Activated CD8-positive, alpha-beta T cell treated with anti-CD3 and anti-CD28 coated beads for 36 hours (primary cell): ENCODE measurements at regions of chr15 and their contacts with region 1.

Region 1: GRCh38 chr15:40782580-40783227 is 12.9 kb downstream of the C15orf62 start:
- DNase-seq: peak; percentile 87
- ATAC-seq: peak; percentile 90
- H3K4me3 Mint-ChIP-seq: no peak overlapping the region
- H3K27ac Mint-ChIP-seq: no peak overlapping the region
- H3K4me1 Mint-ChIP-seq: peaks cover 17% of the 10 kb centered on the region
- H3K27me3 Mint-ChIP-seq: no peaks in the 10 kb centered on the region
- CTCF ChIP-seq: peak; percentile 77

Region 2: GRCh38 chr15:40702077-40702476 is 80.6 kb before region 1 on chr15:
- CTCF ChIA-PET with region 1: interaction called, 13 read pairs
- POLR2A ChIA-PET with region 1: interaction called, 3 read pairs
- intact Hi-C with region 1: no loop called
- DNase-seq: no peak
- ATAC-seq: no peak
- H3K4me3 Mint-ChIP-seq: no peak overlapping the region
- H3K27ac Mint-ChIP-seq: no peak overlapping the region
- H3K4me1 Mint-ChIP-seq: peaks cover 3% of the 10 kb centered on the region
- H3K27me3 Mint-ChIP-seq: no peaks in the 10 kb centered on the region
- CTCF ChIP-seq: no peak

Region 3: GRCh38 chr15:40736575-40736974 is 46.1 kb before region 1 on chr15:
- CTCF ChIA-PET with region 1: interaction called, 18 read pairs
- POLR2A ChIA-PET with region 1: no interaction called
- intact Hi-C with region 1: no loop called
- DNase-seq: no peak
- ATAC-seq: no peak
- H3K4me3 Mint-ChIP-seq: no peak overlapping the region
- H3K27ac Mint-ChIP-seq: no peak overlapping the region
- H3K4me1 Mint-ChIP-seq: peaks cover 2% of the 10 kb centered on the region
- H3K27me3 Mint-ChIP-seq: no peaks in the 10 kb centered on the region
- CTCF ChIP-seq: no peak

Region 4: DNA sequence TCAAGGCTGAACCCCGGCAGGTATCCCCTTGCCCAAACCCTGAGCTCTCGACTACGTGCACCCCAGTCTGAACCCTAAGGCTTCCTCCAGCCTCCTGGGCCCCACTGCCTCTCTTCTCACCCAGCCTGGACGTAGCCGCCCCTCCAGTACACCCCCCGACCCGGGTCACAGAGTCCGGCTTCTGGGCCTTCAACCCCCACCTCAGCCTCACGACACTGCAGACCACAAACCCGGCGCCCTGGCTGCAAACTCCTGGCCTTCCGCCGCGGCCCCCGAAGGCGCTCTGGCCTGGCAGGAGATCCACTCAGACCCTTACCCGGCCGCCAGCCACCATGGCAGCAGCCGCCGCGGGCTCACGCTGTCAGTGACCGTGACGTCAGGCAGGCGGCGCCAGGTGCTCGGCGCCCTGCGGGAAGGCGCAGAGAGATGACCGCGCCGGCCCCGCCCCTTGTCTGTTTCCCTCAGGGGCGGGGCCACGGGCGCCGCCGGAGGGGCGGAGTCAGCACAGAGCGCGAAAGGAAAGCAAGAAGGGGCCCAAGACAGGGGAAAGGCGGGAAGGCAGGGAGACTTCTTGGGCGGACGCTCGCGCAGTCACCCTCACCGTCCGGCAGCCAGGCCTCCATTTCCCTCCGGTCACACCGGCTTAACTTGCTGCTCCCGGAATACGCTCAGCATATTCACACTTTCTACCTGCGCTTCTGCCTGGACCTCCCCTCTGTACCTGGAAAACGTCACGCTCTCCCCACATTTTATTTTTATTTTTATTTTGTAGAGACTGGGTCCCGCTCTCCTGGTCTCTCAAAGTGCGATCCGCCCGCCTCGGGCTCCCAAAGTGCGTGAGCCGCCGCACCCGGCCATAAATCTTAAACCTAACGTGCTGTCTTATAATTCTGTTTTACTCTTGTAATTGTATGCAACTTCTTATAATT is 27.6 kb before region 1 on chr15 and contains the start of gene RMDN3:
- CTCF ChIA-PET with region 1: interaction called, 17 read pairs
- POLR2A ChIA-PET with region 1: interaction called, 3 read pairs
- intact Hi-C with region 1: no loop called
- DNase-seq: peak; percentile 95
- ATAC-seq: peak; percentile 95
- H3K4me3 Mint-ChIP-seq: peak within 1 kb of the TSS; percentile 90
- H3K27ac Mint-ChIP-seq: peak within 1 kb of the TSS; percentile 99
- H3K4me1 Mint-ChIP-seq: peaks cover 27% of the 10 kb centered on the region
- H3K27me3 Mint-ChIP-seq: no peaks in the 10 kb centered on the region
- CTCF ChIP-seq: no peak
- total RNA-seq, gene RMDN3: 20.8 to 21.6 TPM

Region 5: DNA sequence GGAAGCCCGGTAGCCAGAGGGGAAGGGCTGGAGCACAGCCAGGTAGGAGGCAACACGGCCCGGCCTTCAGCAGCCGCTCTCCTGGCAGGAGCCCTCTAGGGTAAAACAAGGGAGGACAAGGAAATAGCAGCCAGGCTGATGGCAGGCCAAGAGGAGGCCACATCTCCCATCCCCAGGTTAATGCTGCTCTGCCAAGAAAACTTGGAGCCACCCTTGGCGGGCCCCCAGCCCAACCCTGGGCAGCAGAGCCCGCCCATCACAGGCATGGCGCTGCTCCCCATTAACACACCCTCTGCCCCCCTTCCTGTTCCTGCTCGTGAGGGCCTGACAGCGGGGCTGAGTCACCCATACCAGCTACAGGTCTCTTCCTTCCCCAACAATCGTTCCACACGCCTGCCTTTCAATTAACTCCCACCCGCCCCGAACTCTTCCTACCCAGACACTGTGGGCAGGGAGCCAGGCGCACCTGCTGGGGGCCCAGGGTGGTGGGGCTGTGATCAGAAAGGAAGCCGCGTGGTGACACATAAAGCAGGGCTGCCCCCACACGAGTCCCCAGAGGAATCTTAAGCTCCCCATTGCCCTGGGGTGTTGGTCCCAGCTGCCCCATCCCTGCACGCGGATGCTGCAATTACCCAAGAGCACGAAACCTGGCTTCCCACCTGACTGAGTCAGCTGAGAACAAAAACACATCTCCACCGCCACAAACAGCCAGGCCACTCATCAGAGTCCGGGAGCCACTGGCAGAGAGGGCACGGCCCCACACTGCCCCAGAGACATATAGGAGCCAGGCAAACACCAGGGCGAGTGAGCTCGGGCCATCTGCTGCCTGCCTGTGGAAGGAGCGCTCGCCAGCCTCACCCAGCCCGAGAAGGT is 13.2 kb before region 1 on chr15 and contains the start of gene C15orf62:
- CTCF ChIA-PET with region 1: interaction called, 27 read pairs
- POLR2A ChIA-PET with region 1: interaction called, 14 read pairs
- intact Hi-C with region 1: no loop called
- DNase-seq: peak; percentile 88
- ATAC-seq: peak; percentile 72
- H3K4me3 Mint-ChIP-seq: peak within 1 kb of the TSS; percentile 59
- H3K27ac Mint-ChIP-seq: peak within 1 kb of the TSS; percentile 92
- H3K4me1 Mint-ChIP-seq: peaks cover 49% of the 10 kb centered on the region
- H3K27me3 Mint-ChIP-seq: no peaks in the 10 kb centered on the region
- CTCF ChIP-seq: no peak
- total RNA-seq, gene C15orf62: 0.61 to 0.63 TPM